ENCODE measurements at regions of chr20 and their contacts with region 1.

Region 1: GRCh38 chr20:34129518-34130162 is 17.6 kb upstream of the EIF2S2 start:
- DNase-seq: peak; percentile 84
- H3K4me3 Mint-ChIP-seq: peak overlapping the region; percentile 15
- H3K27ac Mint-ChIP-seq: peak overlapping the region; percentile 6
- H3K4me1 Mint-ChIP-seq: peaks cover 18% of the 10 kb centered on the region
- H3K27me3 Mint-ChIP-seq: peaks cover 17% of the 10 kb centered on the region
- CTCF ChIP-seq: peak; percentile 95

Region 2: GRCh38 chr20:33862709-33863403 is 266.8 kb before region 1 on chr20:
- CTCF ChIA-PET with region 1: no interaction called
- intact Hi-C with region 1: loop called (anchors 5 kb)
- DNase-seq: peak; percentile 71
- H3K4me3 Mint-ChIP-seq: no peak overlapping the region
- H3K27ac Mint-ChIP-seq: no peak overlapping the region
- H3K4me1 Mint-ChIP-seq: peaks cover 17% of the 10 kb centered on the region
- H3K27me3 Mint-ChIP-seq: peaks cover 13% of the 10 kb centered on the region
- CTCF ChIP-seq: peak; percentile 92

Region 3: GRCh38 chr20:34062570-34063482 is 66.8 kb before region 1 on chr20:
- CTCF ChIA-PET with region 1: no interaction called
- intact Hi-C with region 1: no loop called
- DNase-seq: no peak
- H3K4me3 Mint-ChIP-seq: no peak overlapping the region
- H3K27ac Mint-ChIP-seq: no peak overlapping the region
- H3K4me1 Mint-ChIP-seq: peaks cover 35% of the 10 kb centered on the region
- H3K27me3 Mint-ChIP-seq: no peaks in the 10 kb centered on the region
- CTCF ChIP-seq: no peak

Region 4: DNA sequence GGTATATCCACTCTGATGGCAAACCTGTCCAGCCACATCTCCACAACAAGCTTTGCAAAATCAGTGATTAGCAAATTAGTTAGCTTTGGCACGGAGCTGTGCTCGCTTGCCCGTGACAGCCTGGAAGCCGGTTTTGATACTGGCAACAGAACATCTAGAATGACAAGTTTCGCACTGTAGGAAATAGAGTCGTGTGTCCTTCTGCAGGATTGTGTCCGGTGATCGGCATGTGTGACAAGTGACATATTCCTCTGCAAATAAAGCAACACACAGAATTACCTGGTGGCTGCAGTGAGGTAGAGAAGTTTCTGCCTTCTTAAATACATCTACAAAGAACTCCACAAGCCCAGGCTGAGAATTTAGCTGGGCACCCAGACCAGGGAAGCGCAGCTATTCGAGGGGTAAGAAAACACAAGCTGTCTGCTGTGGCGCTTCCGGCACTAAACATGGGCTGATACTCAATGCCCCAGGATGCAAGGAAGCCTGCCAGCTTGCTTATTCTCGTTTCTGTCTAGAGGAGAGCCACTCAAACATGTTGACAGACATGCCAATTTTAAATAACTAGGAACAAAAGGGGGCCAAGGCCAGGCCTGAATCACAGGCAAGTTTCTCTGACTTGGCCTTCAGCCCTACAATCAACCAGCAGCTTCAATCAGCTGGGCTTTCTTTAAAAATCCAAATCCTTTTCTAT is 39.8 kb before region 1 on chr20:
- CTCF ChIA-PET with region 1: no interaction called
- intact Hi-C with region 1: loop called (anchors 5 kb)
- DNase-seq: no peak
- H3K4me3 Mint-ChIP-seq: no peak overlapping the region
- H3K27ac Mint-ChIP-seq: peak overlapping the region; percentile 22
- H3K4me1 Mint-ChIP-seq: no peaks in the 10 kb centered on the region
- H3K27me3 Mint-ChIP-seq: no peaks in the 10 kb centered on the region
- CTCF ChIP-seq: no peak

Region 5: DNA sequence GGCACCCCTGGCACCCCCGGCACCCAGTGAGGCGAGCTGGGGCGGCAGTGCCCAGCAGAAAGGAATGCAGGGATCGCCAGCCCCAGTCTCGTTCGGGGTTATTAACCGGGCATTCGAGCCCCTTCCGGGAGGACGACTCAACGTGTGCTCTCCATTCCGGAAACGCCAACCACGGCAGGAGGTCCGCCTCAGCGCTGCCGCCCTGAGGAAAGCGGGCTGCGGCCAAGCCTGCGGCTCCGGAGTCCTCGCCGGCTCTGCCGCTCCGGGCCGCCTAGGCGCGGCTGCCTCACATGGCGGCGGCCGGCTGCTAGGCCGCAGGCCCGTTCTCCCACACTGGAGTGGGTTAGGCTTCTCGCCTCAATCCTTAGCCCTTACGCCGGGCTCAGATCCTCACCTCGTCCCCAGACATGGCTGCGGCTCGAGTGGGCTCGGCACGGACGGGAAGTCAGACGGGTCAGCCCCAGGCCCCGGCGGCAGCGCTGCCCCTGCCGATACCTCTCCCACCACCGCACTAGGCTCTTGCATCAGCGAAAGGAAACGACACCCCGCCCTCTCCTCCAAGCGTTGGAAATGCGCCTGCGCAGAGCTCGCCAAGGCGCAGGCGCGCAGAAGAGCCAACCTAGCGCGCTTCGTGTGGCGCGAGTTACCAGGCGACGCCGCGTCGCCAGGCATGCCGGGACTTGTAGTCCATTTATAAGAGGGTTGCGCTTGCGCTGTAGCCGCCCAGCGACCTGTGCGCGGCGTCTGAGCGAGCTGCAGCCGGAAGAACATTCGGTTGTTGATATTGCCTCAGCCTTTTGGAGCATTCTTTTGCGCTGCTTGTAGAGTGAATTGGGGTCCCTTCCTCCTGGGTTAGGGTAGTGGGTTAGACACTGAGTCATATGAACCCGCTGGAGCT is 17.7 kb before region 1 on chr20 and contains the start of gene EIF2S2:
- CTCF ChIA-PET with region 1: interaction called, 6 read pairs
- intact Hi-C with region 1: loop called (anchors 1 kb)
- DNase-seq: peak; percentile 97
- H3K4me3 Mint-ChIP-seq: peak within 1 kb of the TSS; percentile 99
- H3K27ac Mint-ChIP-seq: peak within 1 kb of the TSS; percentile 100
- H3K4me1 Mint-ChIP-seq: peaks cover 49% of the 10 kb centered on the region
- H3K27me3 Mint-ChIP-seq: no peaks in the 10 kb centered on the region
- CTCF ChIP-seq: no peak
- total RNA-seq, gene EIF2S2: 173 and 179 TPM in 2 replicates

Region 6: DNA sequence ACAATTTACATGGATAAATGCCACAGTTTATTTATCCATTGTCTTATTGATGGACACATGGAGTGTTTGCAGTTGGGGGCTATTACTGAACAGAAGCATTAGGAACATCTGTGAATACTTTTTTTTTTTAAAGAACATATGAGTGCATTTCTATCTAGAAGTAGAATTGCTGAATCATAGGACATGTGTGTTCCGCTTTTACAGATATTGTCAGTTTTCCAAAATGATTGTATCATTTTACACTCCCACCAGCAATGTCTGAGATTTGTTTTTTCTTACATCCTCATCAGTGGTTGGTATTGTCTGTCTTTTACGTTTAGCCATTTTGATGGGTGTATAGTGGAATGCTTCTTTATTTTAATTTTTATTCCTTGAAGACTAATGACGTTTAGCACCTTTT is 69.5 kb after region 1 on chr20:
- CTCF ChIA-PET with region 1: no interaction called
- intact Hi-C with region 1: no loop called
- DNase-seq: no peak
- H3K4me3 Mint-ChIP-seq: no peak overlapping the region
- H3K27ac Mint-ChIP-seq: no peak overlapping the region
- H3K4me1 Mint-ChIP-seq: no peaks in the 10 kb centered on the region
- H3K27me3 Mint-ChIP-seq: peaks cover 45% of the 10 kb centered on the region
- CTCF ChIP-seq: no peak

Region 7: GRCh38 chr20:34302723-34303528 is 173.3 kb after region 1 on chr20 and contains the start of gene AHCY:
- CTCF ChIA-PET with region 1: no interaction called
- intact Hi-C with region 1: no loop called
- DNase-seq: peak; percentile 100
- H3K4me3 Mint-ChIP-seq: peak within 1 kb of the TSS; percentile 91
- H3K27ac Mint-ChIP-seq: peak within 1 kb of the TSS; percentile 89
- H3K4me1 Mint-ChIP-seq: no peaks in the 10 kb centered on the region
- H3K27me3 Mint-ChIP-seq: no peaks in the 10 kb centered on the region
- CTCF ChIP-seq: peak; percentile 7
- total RNA-seq, gene AHCY: 169 and 179 TPM in 2 replicates